ENCODE measurements at regions of chr12 and their contacts with region 1.

Region 1: GRCh38 chr12:102958073-102958829 is 777 bp downstream of the ASCL1 start:
- DNase-seq: no peak
- ATAC-seq: peak; percentile 72
- H3K4me3 ChIP-seq: peak overlapping the region; percentile 81
- H3K27ac ChIP-seq: no peak overlapping the region
- H3K4me1 ChIP-seq: peaks cover 8% of the 10 kb centered on the region
- H3K27me3 ChIP-seq: peaks cover 0 to 24% of the 10 kb centered on the region in 2 experiments; a peak in 2 of 4 replicates
- CTCF ChIP-seq: peak in 2 of 3 experiments; percentile 7 to 15; a peak in 2 of 6 replicates
- EP300 ChIP-seq: no peak; a peak in 1 of 4 replicates
- POLR2A ChIP-seq: no peak
- RAD21 ChIP-seq: no peak

Region 2: GRCh38 chr12:102976609-102977280 is 18.5 kb after region 1 on chr12:
- CTCF ChIA-PET with region 1: interaction called, 5 read pairs
- POLR2A ChIA-PET with region 1: interaction called, 6 read pairs
- RAD21 ChIA-PET with region 1: interaction called, 3 read pairs
- SMC1A ChIA-PET with region 1: interaction called, 15 read pairs
- in situ Hi-C with region 1: no loop called
- intact Hi-C with region 1: no loop called
- DNase-seq: no peak
- ATAC-seq: peak; percentile 63
- H3K4me3 ChIP-seq: no peak overlapping the region
- H3K27ac ChIP-seq: no peak overlapping the region
- H3K4me1 ChIP-seq: no peaks in the 10 kb centered on the region
- H3K27me3 ChIP-seq: no peaks in the 10 kb centered on the region
- CTCF ChIP-seq: peak in 2 of 3 experiments; percentile 8 to 16; a peak in 3 of 6 replicates
- EP300 ChIP-seq: no peak
- POLR2A ChIP-seq: no peak
- RAD21 ChIP-seq: peak; percentile 11; the same call in 1 of the 2 replicates

Region 3: GRCh38 chr12:102990419-102990818 is 32.2 kb after region 1 on chr12:
- CTCF ChIA-PET with region 1: interaction called, 16 read pairs
- POLR2A ChIA-PET with region 1: interaction called, 5 read pairs
- RAD21 ChIA-PET with region 1: interaction called, 54 read pairs
- SMC1A ChIA-PET with region 1: interaction called, 37 read pairs
- in situ Hi-C with region 1: no loop called
- intact Hi-C with region 1: no loop called
- DNase-seq: no peak
- ATAC-seq: peak; percentile 49
- H3K4me3 ChIP-seq: no peak overlapping the region
- H3K27ac ChIP-seq: no peak overlapping the region
- H3K4me1 ChIP-seq: no peaks in the 10 kb centered on the region; the same call in 1 of the 2 replicates
- H3K27me3 ChIP-seq: no peaks in the 10 kb centered on the region
- CTCF ChIP-seq: 0 out of 6 replicates have a peak, but pooled peaks of 1 of the 3 experiments have one; percentile 14
- EP300 ChIP-seq: no peak
- POLR2A ChIP-seq: no peak
- RAD21 ChIP-seq: peak; percentile 46; the same call in 1 of the 2 replicates

Region 4: DNA sequence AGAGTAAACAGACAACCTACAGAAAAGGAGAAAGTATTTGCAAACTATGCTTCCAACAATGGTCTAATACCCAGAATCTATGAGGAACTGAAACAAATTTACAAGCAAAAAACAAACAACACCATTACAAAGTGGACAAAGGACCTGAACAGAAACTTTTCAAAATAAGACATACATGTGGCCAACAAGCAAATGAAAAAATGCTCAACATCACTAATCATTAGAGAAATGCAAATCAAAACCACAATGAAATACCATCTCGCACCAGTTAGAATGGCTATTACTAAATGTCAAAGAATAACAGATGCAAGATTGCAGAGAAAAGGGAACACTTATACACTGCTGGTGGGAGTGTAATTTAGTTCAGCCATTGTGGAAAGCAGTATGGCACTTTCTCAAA is 411.7 kb after region 1 on chr12:
- CTCF ChIA-PET with region 1: no interaction called
- POLR2A ChIA-PET with region 1: no interaction called
- RAD21 ChIA-PET with region 1: no interaction called
- SMC1A ChIA-PET with region 1: no interaction called
- in situ Hi-C with region 1: no loop called
- intact Hi-C with region 1: loop called (anchors 5 kb)
- DNase-seq: peak; percentile 78
- ATAC-seq: peak; percentile 89
- H3K4me3 ChIP-seq: no peak overlapping the region
- H3K27ac ChIP-seq: no peak overlapping the region
- H3K4me1 ChIP-seq: peaks cover 10% of the 10 kb centered on the region
- H3K27me3 ChIP-seq: no peaks in the 10 kb centered on the region
- CTCF ChIP-seq: no peak
- EP300 ChIP-seq: peak; percentile 76 to 86
- POLR2A ChIP-seq: no peak
- RAD21 ChIP-seq: no peak

Measured in GM12878 (cell line).